ENCODE measurements at regions of chr6 and their contacts with region 1.

Region 1: GRCh38 chr6:50816115-50816675 is 2.5 kb upstream of the TFAP2B start:
- DNase-seq: peak; percentile 61
- H3K4me3 ChIP-seq: peak overlapping the region; percentile 52 to 97 (median 89)
- H3K27ac ChIP-seq: no peak overlapping the region
- H3K4me1 ChIP-seq: peaks cover 10% of the 10 kb centered on the region
- H3K27me3 ChIP-seq: peaks cover 44% of the 10 kb centered on the region
- CTCF ChIP-seq: peak; percentile 78 to 81

Region 2: GRCh38 chr6:50707652-50708300 is 108.4 kb before region 1 on chr6:
- CTCF ChIA-PET with region 1: no interaction called
- dilution Hi-C with region 1: no loop called
- in situ Hi-C with region 1: no loop called
- intact Hi-C with region 1: no loop called
- DNase-seq: no peak
- H3K4me3 ChIP-seq: no peak overlapping the region
- H3K27ac ChIP-seq: no peak overlapping the region
- H3K4me1 ChIP-seq: no peaks in the 10 kb centered on the region
- H3K27me3 ChIP-seq: peaks cover 41% of the 10 kb centered on the region
- CTCF ChIP-seq: no peak

Region 3: DNA sequence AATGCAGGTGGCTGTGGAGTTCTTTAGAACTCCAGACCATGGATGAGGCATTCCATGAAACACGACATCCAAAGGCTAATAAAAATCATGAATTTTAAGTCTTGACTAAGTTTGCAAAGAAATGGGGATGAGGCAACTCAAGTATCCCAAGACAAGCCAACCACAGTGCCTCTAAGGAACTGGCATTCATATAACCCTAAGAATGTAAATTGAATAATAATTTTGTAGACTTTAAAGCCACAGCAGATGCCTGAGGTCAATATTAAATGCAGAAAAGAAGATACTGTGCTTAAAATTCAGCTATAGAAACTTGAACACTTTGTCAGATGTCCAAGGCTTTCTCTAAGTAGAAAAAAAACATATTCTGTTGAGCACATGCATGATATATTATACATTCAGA is 57.0 kb after region 1 on chr6:
- CTCF ChIA-PET with region 1: no interaction called
- dilution Hi-C with region 1: no loop called
- in situ Hi-C with region 1: no loop called
- intact Hi-C with region 1: loop called (anchors 10 kb)
- DNase-seq: no peak
- H3K4me3 ChIP-seq: no peak overlapping the region
- H3K27ac ChIP-seq: no peak overlapping the region
- H3K4me1 ChIP-seq: no peaks in the 10 kb centered on the region
- H3K27me3 ChIP-seq: peaks cover 4% of the 10 kb centered on the region
- CTCF ChIP-seq: no peak

Region 4: GRCh38 chr6:51513891-51514747 is 697.9 kb after region 1 on chr6:
- CTCF ChIA-PET with region 1: interaction called, 3 read pairs
- dilution Hi-C with region 1: no loop called
- in situ Hi-C with region 1: no loop called
- intact Hi-C with region 1: loop called (anchors 1 kb)
- DNase-seq: peak; percentile 93
- H3K4me3 ChIP-seq: no peak overlapping the region
- H3K27ac ChIP-seq: peak overlapping the region; percentile 45
- H3K4me1 ChIP-seq: peaks cover 13% of the 10 kb centered on the region
- H3K27me3 ChIP-seq: no peaks in the 10 kb centered on the region
- CTCF ChIP-seq: no peak

Region 5: DNA sequence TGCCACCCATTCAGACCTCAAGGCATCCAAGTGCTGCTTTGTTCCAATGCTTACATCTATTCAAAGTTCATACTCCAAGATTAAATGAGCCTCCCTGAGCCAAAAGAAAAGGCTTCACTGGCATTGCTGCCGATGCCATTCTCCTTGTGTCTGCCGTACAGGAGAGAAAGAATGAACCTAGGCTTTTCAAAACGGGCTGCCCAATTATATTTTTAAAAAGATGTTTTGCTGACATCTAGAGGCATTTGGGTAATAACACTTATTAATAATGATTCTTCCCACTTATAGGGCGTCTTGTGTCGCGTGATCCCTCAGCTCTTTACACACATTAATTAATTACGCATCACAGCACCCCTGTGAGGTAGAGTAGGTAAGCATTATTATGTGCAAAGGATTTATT is 725.7 kb after region 1 on chr6:
- CTCF ChIA-PET with region 1: no interaction called
- dilution Hi-C with region 1: no loop called
- in situ Hi-C with region 1: loop called (anchors 10 kb)
- intact Hi-C with region 1: loop called (anchors 1 kb)
- DNase-seq: peak; percentile 14
- H3K4me3 ChIP-seq: no peak overlapping the region
- H3K27ac ChIP-seq: no peak overlapping the region
- H3K4me1 ChIP-seq: no peaks in the 10 kb centered on the region
- H3K27me3 ChIP-seq: peaks cover 10% of the 10 kb centered on the region
- CTCF ChIP-seq: peak; percentile 17 to 33

Region 6: GRCh38 chr6:51855310-51856082 is 1039.3 kb after region 1 on chr6:
- CTCF ChIA-PET with region 1: no interaction called
- dilution Hi-C with region 1: no loop called
- in situ Hi-C with region 1: no loop called
- intact Hi-C with region 1: loop called (anchors 10 kb)
- DNase-seq: peak; percentile 41
- H3K4me3 ChIP-seq: no peak overlapping the region
- H3K27ac ChIP-seq: no peak overlapping the region
- H3K4me1 ChIP-seq: no peaks in the 10 kb centered on the region
- H3K27me3 ChIP-seq: peaks cover 2% of the 10 kb centered on the region
- CTCF ChIP-seq: peak; percentile 61 to 67

Region 7: DNA sequence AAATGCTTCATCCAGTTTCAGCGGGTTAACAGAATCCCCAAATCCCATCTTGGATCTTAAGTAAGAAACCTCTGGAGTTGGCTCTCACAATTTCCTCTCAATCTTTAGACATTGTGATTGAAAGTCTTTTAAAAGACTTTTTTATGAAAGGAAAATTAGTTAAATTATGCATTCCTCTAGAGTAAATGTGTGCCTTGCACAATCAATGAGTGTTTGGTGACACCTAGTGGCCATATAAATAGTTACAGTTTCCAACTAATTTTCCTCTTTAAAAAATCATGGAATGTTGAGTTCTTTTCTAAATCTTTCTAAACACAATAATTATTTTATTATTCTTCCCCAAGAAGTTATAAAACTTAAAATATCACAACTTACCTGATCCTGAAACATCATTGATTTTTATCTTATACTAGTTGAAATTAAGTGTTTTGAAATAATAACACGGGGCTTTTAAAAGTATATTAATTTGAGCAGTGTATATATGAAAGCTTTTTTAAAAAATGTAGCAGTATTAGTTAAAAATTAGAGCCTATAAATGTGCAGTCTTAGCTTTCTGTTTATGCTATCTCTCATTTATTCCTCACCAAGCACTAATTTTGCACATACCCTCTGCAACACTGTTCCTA is 1204.9 kb after region 1 on chr6:
- CTCF ChIA-PET with region 1: no interaction called
- dilution Hi-C with region 1: no loop called
- in situ Hi-C with region 1: no loop called
- intact Hi-C with region 1: loop called (anchors 2 kb)
- DNase-seq: peak; percentile 10
- H3K4me3 ChIP-seq: no peak overlapping the region
- H3K27ac ChIP-seq: no peak overlapping the region
- H3K4me1 ChIP-seq: no peaks in the 10 kb centered on the region
- H3K27me3 ChIP-seq: peaks cover 2% of the 10 kb centered on the region
- CTCF ChIP-seq: peak; percentile 56 to 65